OCI-LY7 (cell line): ENCODE measurements at regions of chr9 and their contacts with region 1.

Region 1: GRCh38 chr9:125374443-125375309 is 113.0 kb downstream of the GAPVD1 start:
- DNase-seq: peak; percentile 87
- H3K4me3 ChIP-seq: peak overlapping the region; percentile 13
- H3K27ac ChIP-seq: no peak overlapping the region
- H3K4me1 ChIP-seq: peaks cover 7% of the 10 kb centered on the region
- CTCF ChIP-seq: peak; percentile 89

Region 2: DNA sequence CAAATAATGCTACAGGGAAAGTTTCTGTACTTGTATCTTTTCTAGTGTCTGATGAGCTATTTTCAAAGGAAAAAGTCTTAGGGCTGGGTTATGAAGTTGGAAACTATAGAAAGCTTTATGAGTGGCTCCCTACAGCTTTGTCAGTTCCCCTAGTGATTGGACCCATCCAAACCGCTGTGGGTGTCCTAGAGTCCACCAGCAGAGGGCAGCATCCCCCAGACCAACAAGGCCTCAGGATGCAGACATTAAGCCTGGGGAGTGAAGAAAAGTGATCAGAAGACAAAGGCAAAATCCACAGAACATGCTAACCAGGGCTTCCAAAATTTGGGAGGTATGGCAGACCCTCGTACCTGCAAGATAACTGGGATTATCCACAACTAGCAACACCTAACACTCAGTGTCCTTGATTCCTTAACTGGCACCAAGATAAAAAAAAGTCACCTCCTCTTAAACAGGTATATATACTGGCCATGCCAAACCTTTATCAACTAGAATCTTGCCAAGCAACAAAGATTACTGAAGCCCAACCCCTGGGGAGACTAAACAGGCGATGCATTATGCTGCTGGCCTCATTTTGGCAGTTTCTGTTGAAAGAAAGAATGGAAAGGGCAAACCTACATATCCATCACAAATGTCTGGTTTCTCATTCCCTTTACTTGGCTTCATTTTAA is 757.1 kb before region 1 on chr9:
- CTCF ChIA-PET with region 1: no interaction called
- POLR2A ChIA-PET with region 1: no interaction called
- intact Hi-C with region 1: loop called (anchors 10 kb)
- DNase-seq: peak; percentile 76
- H3K4me3 ChIP-seq: no peak overlapping the region
- H3K27ac ChIP-seq: no peak overlapping the region
- H3K4me1 ChIP-seq: peaks cover 6% of the 10 kb centered on the region
- CTCF ChIP-seq: peak; percentile 98

Region 3: GRCh38 chr9:124852829-124853531 is 521.7 kb before region 1 on chr9 and contains the start of gene WDR38:
- CTCF ChIA-PET with region 1: no interaction called
- POLR2A ChIA-PET with region 1: no interaction called
- intact Hi-C with region 1: loop called (anchors 10 kb)
- DNase-seq: peak; percentile 76
- H3K4me3 ChIP-seq: peak within 1 kb of the TSS; percentile 63
- H3K27ac ChIP-seq: no peak within 1 kb of the TSS
- H3K4me1 ChIP-seq: peaks cover 11% of the 10 kb centered on the region
- CTCF ChIP-seq: peak; percentile 94
- total RNA-seq, gene WDR38: not detected in 2 replicates

Region 4: GRCh38 chr9:124894741-124895170 is 479.9 kb before region 1 on chr9:
- CTCF ChIA-PET with region 1: no interaction called
- POLR2A ChIA-PET with region 1: no interaction called
- intact Hi-C with region 1: loop called (anchors 5 kb)
- DNase-seq: peak; percentile 83
- H3K4me3 ChIP-seq: no peak overlapping the region
- H3K27ac ChIP-seq: no peak overlapping the region
- H3K4me1 ChIP-seq: peaks cover 8% of the 10 kb centered on the region
- CTCF ChIP-seq: peak; percentile 88

Region 5: GRCh38 chr9:125143375-125144090 is 231.1 kb before region 1 on chr9 and contains the start of gene SCAI:
- CTCF ChIA-PET with region 1: no interaction called
- POLR2A ChIA-PET with region 1: interaction called, 3 read pairs
- intact Hi-C with region 1: loop called (anchors 1 kb)
- DNase-seq: peak; percentile 99
- H3K4me3 ChIP-seq: peak within 1 kb of the TSS; percentile 82
- H3K27ac ChIP-seq: peak within 1 kb of the TSS; percentile 40
- H3K4me1 ChIP-seq: peaks cover 22% of the 10 kb centered on the region
- CTCF ChIP-seq: peak; percentile 91
- total RNA-seq, gene SCAI: 23.8 and 25.0 TPM in 2 replicates

Region 6: DNA sequence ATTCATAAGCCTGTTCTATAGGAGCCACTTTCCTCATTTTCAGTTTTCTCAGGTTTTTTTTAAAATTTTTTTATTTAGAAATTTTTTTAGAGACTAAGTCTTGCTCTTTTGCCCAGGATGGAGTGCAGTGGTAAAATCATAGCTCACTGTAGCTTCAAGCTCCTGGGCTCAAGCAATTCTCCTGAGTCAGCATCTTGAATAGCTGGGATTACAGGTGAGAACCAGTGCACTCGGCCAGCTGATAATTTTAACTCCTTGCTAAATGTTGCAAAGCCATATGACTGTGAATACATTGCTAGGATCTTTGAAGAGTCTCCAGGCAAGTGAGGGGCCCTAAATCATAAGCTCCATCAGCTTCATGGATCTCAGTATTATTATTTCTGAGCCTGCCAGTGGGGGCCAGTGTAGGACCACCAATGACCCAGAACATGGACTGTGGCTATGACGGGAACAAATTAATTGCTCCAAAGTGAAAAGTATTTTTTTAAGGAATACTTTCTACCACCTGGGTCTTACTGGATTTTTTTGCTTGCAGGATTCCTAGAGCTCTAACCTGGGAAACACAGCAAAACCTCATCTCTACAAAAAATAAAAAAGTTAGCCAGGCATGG is 118.8 kb before region 1 on chr9:
- CTCF ChIA-PET with region 1: interaction called, 3 read pairs
- POLR2A ChIA-PET with region 1: no interaction called
- intact Hi-C with region 1: loop called (anchors 1 kb)
- DNase-seq: peak; percentile 32
- H3K4me3 ChIP-seq: no peak overlapping the region
- H3K27ac ChIP-seq: no peak overlapping the region
- H3K4me1 ChIP-seq: peaks cover under 1% of the 10 kb centered on the region
- CTCF ChIP-seq: peak; percentile 74

Region 7: DNA sequence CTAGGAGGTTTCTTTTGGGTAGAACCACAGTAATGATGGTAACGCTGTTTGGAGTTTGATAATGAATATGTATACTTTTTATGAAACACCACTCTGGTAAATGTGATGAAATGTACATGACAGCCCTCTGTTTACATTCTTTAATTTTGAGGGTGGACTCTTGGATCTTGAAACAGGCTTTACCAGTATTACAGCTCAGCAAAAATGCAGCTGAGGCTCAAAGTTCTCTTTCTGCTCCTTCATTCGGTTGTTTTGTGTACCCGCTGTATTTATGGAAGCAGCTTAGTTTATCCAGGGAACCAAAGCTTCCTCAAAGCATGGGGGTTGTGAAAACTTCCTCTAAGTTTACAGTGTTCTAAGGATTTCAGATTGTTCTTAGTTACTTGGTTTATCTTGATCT is 102.0 kb before region 1 on chr9:
- CTCF ChIA-PET with region 1: no interaction called
- POLR2A ChIA-PET with region 1: no interaction called
- intact Hi-C with region 1: no loop called
- DNase-seq: no peak
- H3K4me3 ChIP-seq: no peak overlapping the region
- H3K27ac ChIP-seq: no peak overlapping the region
- H3K4me1 ChIP-seq: no peaks in the 10 kb centered on the region
- CTCF ChIP-seq: no peak